Cardiac septum (tissue), 1 donor: ENCODE measurements at regions of chr6 and their contacts with region 1.

Region 1: GRCh38 chr6:150417899-150418826 is 49.4 kb downstream of the IYD start:
- DNase-seq: no peak

Region 2: GRCh38 chr6:150514599-150515401 is 96.6 kb after region 1 on chr6:
- intact Hi-C with region 1: no loop called
- DNase-seq: no peak

Region 3: GRCh38 chr6:150600301-150601017 is 182.3 kb after region 1 on chr6:
- intact Hi-C with region 1: loop called (anchors 2 kb)
- DNase-seq: no peak

Region 4: DNA sequence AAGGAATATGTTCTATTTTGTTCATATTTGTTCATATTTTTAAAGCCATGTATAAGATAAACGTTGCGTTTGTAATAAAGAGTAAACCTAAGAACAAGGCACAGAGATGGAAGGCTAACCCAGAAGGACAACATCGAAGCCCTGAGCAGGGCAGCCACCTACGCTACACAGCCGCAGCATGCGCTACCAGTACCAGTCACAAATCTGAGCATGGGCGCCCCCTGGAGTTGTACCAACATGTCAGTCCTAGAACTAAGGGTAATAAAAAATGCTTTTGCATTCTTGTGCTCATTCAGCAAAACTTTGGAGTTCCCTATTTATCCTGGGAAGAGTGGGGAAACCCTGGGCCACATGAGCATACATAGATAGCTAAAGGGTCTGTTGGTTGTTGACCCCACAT is 252.1 kb after region 1 on chr6:
- intact Hi-C with region 1: loop called (anchors 5 kb)
- DNase-seq: no peak